Calu3 (cell line): ENCODE measurements at regions of chr4 and their contacts with region 1.

Region 1: GRCh38 chr4:71974681-71975080 is 57.1 kb upstream of the NPFFR2 start:
- DNase-seq: peak; percentile 38
- H3K4me3 Mint-ChIP-seq: no peak overlapping the region
- H3K27ac Mint-ChIP-seq: peak overlapping the region; percentile 59
- H3K4me1 Mint-ChIP-seq: peaks cover 23% of the 10 kb centered on the region
- H3K27me3 Mint-ChIP-seq: no peaks in the 10 kb centered on the region
- CTCF ChIP-seq: no peak

Region 2: GRCh38 chr4:72112514-72113156 is 138.0 kb after region 1 on chr4:
- CTCF ChIA-PET with region 1: no interaction called
- intact Hi-C with region 1: loop called (anchors 10 kb)
- DNase-seq: peak; percentile 49
- H3K4me3 Mint-ChIP-seq: peak overlapping the region; percentile 35
- H3K27ac Mint-ChIP-seq: peak overlapping the region; percentile 97
- H3K4me1 Mint-ChIP-seq: peaks cover 23% of the 10 kb centered on the region
- H3K27me3 Mint-ChIP-seq: no peaks in the 10 kb centered on the region
- CTCF ChIP-seq: no peak